Spleen (tissue), 13 donors: ENCODE measurements at regions of chr6 and their contacts with region 1.

Region 1: GRCh38 chr6:2634139-2634964 is 116.4 kb downstream of the MYLK4 start:
- DNase-seq: peak; percentile 95
- H3K4me3 ChIP-seq: peak overlapping the region; percentile 45 to 79 (median 52)
- H3K27ac ChIP-seq: peak overlapping the region in 6 of 8 donors; percentile 2 to 69 (median 44)
- H3K4me1 ChIP-seq: peaks cover 7 to 17% (median 14%) of the 10 kb centered on the region in 6 donors
- H3K27me3 ChIP-seq: peaks cover 0 to 29% (median 0%) of the 10 kb centered on the region in 7 donors
- CTCF ChIP-seq: peak; percentile 78 to 99 (median 96)
- POLR2A ChIP-seq: no peak

Region 2: GRCh38 chr6:1596088-1596852 is 1038.1 kb before region 1 on chr6:
- intact Hi-C with region 1: loop called (anchors 5 kb)
- DNase-seq: peak; percentile 91
- H3K4me3 ChIP-seq: peak overlapping the region in 1 of 8 donors; percentile 26
- H3K27ac ChIP-seq: no peak overlapping the region
- H3K4me1 ChIP-seq: peaks cover 0 to 10% (median 7%) of the 10 kb centered on the region in 6 donors
- H3K27me3 ChIP-seq: peaks cover 0 to 87% (median 36%) of the 10 kb centered on the region in 7 donors
- CTCF ChIP-seq: peak; percentile 77 to 97 (median 94)
- POLR2A ChIP-seq: no peak

Region 3: GRCh38 chr6:2103644-2104523 is 530.5 kb before region 1 on chr6:
- intact Hi-C with region 1: loop called (anchors 10 kb)
- DNase-seq: no peak
- H3K4me3 ChIP-seq: no peak overlapping the region
- H3K27ac ChIP-seq: no peak overlapping the region
- H3K4me1 ChIP-seq: peaks cover 0 to 13% (median 0%) of the 10 kb centered on the region in 6 donors
- H3K27me3 ChIP-seq: no peaks in the 10 kb centered on the region
- CTCF ChIP-seq: peak in 9 of 11 experiments; percentile 33 to 59 (median 50)
- POLR2A ChIP-seq: no peak

Region 4: DNA sequence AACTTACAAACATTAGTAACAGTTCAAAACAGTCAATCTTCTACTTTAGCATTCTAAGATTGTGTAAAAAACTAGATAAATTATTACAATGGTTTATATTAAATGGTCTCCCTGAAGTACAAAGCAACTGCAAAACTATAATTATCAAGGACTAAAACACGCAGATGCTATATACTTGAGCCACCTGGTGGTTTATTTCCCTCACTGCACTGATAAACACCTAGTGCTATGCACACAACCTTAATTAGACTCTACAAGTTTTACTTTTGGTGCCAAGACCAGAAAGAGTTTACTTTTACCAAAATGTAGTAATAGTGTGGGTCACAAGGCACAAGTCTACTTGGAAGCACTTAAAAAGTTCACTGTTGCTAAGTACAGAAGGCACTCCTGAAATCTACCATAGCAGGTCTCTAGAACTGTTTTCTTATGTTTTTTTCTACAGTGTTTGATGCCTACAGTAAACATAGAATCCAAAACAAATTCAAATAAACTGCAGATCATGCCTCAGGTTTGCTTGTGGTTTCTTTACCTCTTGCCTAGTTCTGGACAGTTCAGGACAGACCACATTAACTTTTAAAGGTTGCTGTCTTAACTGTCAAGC is 438.2 kb before region 1 on chr6:
- intact Hi-C with region 1: loop called (anchors 10 kb)
- DNase-seq: no peak
- H3K4me3 ChIP-seq: no peak overlapping the region
- H3K27ac ChIP-seq: no peak overlapping the region
- H3K4me1 ChIP-seq: peaks cover 0 to 18% (median 5%) of the 10 kb centered on the region in 6 donors
- H3K27me3 ChIP-seq: no peaks in the 10 kb centered on the region
- CTCF ChIP-seq: peak; percentile 55 to 86 (median 75)
- POLR2A ChIP-seq: no peak

Region 5: DNA sequence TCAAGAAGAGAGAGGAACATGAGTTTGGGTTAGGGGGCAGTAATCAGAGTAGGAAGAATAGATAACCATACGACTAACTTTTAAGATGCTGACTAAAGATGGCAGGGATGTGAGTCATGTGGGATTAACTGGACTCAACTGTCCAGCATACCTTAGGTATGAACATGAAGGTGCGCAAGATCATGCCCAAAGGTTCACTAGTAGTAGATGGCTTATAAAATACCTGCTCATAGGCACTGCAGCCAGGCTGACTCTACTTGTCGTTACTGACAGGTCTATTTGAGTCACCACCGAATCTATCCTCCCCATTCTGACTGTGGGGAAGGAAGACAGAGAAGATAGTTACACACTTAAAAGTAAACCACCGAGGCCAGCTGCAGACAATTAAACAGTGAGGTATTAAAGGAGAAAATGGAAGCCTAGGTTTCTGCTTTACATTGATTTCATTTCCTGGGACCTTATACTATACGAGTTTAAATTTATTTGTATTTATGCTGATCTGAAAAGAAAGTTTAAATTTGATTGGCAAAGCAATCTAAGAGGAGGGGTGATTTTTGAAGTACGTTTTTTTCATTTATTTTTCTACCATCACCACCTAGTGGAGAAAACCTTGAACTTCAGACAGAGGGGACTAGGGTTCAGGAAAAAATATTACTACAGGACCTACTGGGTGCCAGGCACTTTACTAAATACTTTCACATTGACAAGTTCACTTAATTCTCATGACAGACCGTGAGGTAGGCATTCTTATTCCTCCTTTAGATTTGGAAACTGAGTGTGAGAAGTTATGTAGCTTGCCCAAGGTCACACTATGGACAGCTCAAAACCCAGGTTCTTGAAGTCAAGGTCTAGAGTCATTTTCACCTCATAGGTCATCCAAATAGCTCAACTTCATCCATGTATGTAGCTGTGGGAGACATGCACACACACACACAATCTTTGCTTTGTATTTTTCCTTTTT is 126.8 kb after region 1 on chr6:
- intact Hi-C with region 1: no loop called
- DNase-seq: no peak
- H3K4me3 ChIP-seq: no peak overlapping the region
- H3K27ac ChIP-seq: no peak overlapping the region
- H3K4me1 ChIP-seq: peaks cover 2 to 18% (median 9%) of the 10 kb centered on the region in 6 donors
- H3K27me3 ChIP-seq: no peaks in the 10 kb centered on the region
- CTCF ChIP-seq: peak in 9 of 11 experiments; percentile 14 to 66 (median 49)
- POLR2A ChIP-seq: no peak